Dorsolateral prefrontal cortex (tissue), 120 donors: ENCODE measurements at regions of chr3 and their contacts with region 1.

Region 1: DNA sequence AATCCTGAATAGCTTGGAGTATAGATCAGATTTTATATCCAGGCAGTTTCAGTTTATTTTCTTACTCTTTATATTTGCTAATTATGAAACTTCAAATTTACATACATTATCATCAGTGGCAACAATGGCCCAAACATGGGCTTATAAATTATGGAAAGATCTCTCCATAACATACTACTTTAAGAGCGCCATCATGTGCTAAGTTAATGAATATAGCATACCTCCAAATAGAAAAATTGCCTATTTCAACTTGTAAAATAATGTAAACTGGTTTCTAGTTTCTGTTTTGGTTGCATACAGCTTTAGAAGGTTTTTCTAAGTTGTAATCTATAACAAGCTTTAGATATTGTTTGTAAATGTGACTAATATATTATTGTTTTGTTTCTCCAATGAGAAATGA is 531.3 kb upstream of the UBE2E2 start:
- DNase-seq: no peak
- H3K4me3 ChIP-seq: no peak overlapping the region
- H3K27ac ChIP-seq: no peak overlapping the region
- H3K27me3 ChIP-seq: no peaks in the 10 kb centered on the region
- CTCF ChIP-seq: no peak

Region 2: GRCh38 chr3:22565393-22565792 is 106.5 kb before region 1 on chr3:
- intact Hi-C with region 1: loop called in 1 of 2 experiments (anchors 10 kb)
- DNase-seq: no peak
- H3K4me3 ChIP-seq: no peak overlapping the region
- H3K27ac ChIP-seq: no peak overlapping the region
- H3K27me3 ChIP-seq: no peaks in the 10 kb centered on the region
- CTCF ChIP-seq: no peak